Prostate gland (tissue), 2 donors: ENCODE measurements at regions of chr13 and their contacts with region 1.

Region 1: DNA sequence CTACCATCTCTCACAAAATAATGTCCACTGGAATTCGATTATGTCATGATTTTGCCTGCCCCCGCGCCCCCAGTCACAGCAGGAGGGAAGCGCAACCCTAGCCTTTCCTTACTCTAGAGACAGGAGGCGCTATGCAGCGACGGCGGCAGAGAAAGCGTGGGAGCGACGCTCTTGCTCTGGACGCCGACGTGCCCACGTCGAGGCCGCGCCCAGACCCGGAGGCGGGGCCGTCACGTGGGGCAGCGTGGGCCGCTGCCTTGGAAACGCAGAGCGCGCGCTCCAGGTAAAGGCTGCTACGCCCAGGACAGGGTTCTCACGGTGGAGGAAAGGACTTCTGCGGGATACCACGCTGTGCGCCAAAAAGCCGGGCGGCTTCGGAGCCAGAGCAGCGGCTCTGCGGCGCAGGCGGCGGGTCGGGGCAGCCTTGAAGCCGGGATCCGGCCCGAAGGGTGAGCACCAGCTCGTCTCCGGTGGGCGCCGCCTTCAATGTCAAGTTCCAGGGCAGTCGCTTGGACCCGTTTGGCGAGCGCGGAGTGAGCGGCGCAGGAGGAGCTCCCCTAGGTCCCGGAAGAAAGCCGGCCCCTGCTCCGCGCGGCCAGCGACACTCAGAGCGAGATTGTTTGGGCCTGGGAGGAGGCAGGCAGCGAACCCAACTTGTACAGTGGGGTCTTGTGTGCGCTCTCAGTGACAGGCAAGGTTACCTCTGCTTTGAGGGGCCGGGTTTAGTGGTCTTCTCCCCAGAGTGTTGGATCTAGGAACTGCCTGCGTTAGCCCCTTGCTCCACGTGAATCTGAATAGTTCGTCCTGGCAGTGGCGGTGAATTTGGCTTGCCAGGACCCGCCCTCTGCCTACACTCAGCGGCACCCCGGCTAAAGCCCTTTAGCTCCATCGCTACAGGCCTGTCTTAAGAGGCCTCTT is 121.7 kb downstream of the MRPL57 start:
- DNase-seq: peak; percentile 82
- H3K4me3 ChIP-seq: peak overlapping the region; percentile 93 to 97
- H3K27ac ChIP-seq: peak overlapping the region; percentile 78 to 83
- H3K4me1 ChIP-seq: no peaks in the 10 kb centered on the region
- H3K27me3 ChIP-seq: no peaks in the 10 kb centered on the region
- CTCF ChIP-seq: peak; percentile 50 to 96 (median 91)
- POLR2A ChIP-seq: peak; percentile 59

Region 2: DNA sequence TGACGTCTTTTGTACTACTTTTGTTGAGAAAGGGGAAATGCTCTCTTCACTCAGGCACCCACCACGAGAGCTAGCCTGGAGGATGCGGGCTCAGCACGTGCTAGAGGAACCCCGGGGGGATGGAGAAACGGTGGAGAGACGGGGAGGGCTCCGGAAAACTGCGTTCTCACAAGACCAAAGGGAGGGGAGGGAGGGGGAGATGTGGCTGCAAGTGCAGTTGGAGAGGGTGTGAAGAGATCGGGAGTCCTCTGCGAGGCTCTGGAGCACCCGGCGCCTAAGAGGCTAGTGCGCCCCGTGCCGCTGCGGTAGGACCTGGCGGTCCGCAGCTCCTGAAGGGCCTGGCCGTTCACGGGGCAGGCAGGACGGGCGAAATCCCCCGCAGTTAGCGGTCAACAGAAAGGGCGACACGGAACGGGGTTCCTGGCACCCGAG is 352.2 kb before region 1 on chr13:
- intact Hi-C with region 1: loop called (anchors 5 kb)
- DNase-seq: no peak
- H3K4me3 ChIP-seq: no peak overlapping the region
- H3K27ac ChIP-seq: no peak overlapping the region
- H3K4me1 ChIP-seq: no peaks in the 10 kb centered on the region
- H3K27me3 ChIP-seq: no peaks in the 10 kb centered on the region
- CTCF ChIP-seq: no peak
- POLR2A ChIP-seq: no peak

Region 3: GRCh38 chr13:21458813-21459701 is 160.9 kb after region 1 on chr13 and contains the start of gene ZDHHC20:
- intact Hi-C with region 1: loop called (anchors 5 kb)
- DNase-seq: peak; percentile 82
- H3K4me3 ChIP-seq: peak within 1 kb of the TSS; percentile 93 to 97
- H3K27ac ChIP-seq: peak within 1 kb of the TSS; percentile 82 to 90
- H3K4me1 ChIP-seq: peaks cover 3% of the 10 kb centered on the region
- H3K27me3 ChIP-seq: no peaks in the 10 kb centered on the region
- CTCF ChIP-seq: no peak
- POLR2A ChIP-seq: peak; percentile 89
- total RNA-seq, gene ZDHHC20: 50.4 to 77.1 TPM